Activated B cell treated with CpG ODN at 0.5 μM for 24 hours (primary cell): ENCODE measurements at regions of chr20 and their contacts with region 1.

Region 1: DNA sequence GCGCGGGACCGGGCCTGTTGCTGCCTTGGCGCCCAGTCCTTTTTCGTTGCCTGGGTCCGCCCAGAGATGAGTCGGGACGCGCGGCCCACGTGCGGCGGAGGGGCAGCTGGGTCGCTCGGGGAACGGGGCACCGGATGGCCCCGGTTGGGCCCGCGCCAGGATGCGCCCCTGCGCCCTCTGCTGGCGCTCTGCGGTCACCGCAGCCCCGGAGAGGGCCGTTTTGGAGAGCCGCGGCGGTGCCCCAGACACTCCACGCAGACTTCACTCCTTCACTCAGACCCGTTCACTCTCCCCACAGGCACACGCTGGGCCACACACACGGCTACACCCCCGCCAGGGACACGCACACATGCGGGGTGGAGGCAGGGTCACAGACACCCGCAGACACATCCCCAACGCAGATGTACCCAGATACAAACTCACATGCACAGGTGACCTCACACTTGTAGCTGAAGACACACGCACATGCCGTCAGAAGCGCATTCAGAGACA is 38.8 kb downstream of the SRC start:
- DNase-seq: peak; percentile 87
- ATAC-seq: peak; percentile 59
- H3K4me3 Mint-ChIP-seq: peak overlapping the region; percentile 80
- H3K27ac Mint-ChIP-seq: peak overlapping the region; percentile 82
- H3K4me1 Mint-ChIP-seq: peaks cover 47% of the 10 kb centered on the region
- H3K27me3 Mint-ChIP-seq: no peaks in the 10 kb centered on the region
- CTCF ChIP-seq: peak; percentile 77

Region 2: DNA sequence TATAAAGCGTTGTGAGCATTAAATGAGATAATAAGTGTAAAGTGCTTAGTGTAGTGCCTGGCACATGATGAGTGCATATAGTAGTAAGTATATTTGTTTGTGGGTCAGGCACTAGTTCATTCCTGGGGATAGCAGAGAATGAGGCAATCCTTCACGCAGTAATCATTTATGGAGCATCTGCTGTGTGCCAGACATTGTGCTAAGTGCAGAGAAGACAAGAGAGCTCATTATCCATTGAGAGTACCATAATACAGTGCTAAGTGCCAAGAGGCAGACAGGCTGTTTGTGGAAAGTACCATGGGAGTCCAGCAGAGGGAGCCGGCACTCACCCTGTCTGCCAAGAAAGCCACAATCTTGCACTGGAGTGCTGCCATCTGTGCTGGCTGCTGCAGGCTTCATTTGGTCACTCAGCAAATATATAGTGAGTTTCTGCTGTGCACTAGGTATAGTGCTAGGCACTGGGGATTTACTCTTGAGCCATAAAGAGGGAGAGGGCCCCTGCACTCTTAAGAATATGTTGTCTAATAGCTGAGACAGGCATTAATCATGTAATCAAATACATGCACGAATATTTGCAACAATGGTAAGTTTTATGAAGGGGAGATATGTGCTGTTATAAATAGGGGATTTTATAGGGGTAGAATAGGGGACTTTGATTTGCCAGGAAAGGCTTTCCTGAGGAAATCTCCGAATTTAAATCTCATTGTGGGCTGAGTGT is 192.4 kb before region 1 on chr20:
- CTCF ChIA-PET with region 1: interaction called, 9 read pairs
- POLR2A ChIA-PET with region 1: no interaction called
- intact Hi-C with region 1: loop called (anchors 1 kb)
- DNase-seq: peak; percentile 46
- ATAC-seq: peak; percentile 84
- H3K4me3 Mint-ChIP-seq: no peak overlapping the region
- H3K27ac Mint-ChIP-seq: no peak overlapping the region
- H3K4me1 Mint-ChIP-seq: peaks cover 57% of the 10 kb centered on the region
- H3K27me3 Mint-ChIP-seq: no peaks in the 10 kb centered on the region
- CTCF ChIP-seq: peak; percentile 54

Region 3: DNA sequence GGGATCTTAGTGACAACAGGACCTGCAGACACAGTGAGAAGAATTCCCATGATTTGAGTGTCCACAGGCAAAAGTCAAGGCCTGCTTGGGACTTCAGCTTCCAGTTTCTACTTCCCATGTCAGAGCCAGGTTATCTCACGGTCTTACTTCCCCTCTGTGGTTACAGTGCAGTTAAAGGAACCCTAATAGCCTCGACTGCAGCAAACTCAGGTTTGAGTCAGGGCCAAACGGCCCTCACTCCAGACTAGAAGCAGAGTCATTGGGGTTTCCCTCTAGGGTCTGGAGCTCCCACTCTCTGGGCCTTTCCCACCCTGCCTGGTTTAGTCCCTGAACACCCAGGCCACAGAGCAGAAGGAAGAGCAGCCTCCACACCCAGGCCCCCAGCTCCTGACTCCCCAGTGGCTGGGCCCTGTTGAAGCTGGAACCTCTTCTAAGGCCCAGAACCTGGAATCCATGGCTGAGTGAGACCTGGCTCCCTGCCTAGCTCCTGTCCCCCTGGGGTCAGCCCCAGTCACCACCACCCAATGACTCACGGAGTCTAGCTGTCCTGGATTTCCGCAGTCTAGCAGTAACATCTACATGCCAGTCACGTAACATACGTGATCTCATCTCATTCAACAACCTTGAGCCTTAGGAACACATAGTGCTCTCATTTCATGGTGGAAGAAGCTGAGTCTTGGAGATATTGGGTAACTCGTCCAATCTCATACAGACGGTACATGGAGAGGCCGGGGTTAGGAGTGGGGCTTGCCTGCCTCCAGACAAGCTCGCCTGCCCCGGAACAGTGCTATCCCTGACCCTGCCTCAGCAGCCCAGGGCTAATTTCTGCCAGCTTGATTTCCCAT is 113.9 kb before region 1 on chr20:
- CTCF ChIA-PET with region 1: interaction called, 59 read pairs
- POLR2A ChIA-PET with region 1: interaction called, 14 read pairs
- intact Hi-C with region 1: loop called (anchors 1 kb)
- DNase-seq: peak; percentile 20
- ATAC-seq: peak; percentile 74
- H3K4me3 Mint-ChIP-seq: peak overlapping the region; percentile 11
- H3K27ac Mint-ChIP-seq: peak overlapping the region; percentile 72
- H3K4me1 Mint-ChIP-seq: peaks cover 52% of the 10 kb centered on the region
- H3K27me3 Mint-ChIP-seq: no peaks in the 10 kb centered on the region
- CTCF ChIP-seq: no peak

Region 4: DNA sequence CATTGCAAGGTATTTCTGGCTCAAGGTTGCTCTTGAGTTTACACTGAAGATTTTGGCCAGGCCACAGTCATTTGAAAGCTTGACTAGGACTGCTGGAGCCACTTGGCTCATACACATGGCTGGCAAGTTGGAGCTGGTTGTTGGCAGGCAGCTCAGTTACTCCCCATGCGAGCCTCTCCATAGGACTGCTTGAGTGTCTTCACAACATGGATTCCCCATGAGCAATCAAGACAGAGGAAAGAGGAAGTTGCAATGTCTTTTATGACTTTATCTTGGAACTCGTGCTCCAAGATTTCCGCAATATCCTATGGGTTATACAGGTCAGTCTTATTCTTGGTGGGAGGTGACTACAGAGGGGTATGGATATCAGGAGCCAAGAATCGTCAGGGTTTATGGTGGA is 96.6 kb before region 1 on chr20:
- CTCF ChIA-PET with region 1: interaction called, 13 read pairs
- POLR2A ChIA-PET with region 1: interaction called, 6 read pairs
- intact Hi-C with region 1: loop called (anchors 1 kb)
- DNase-seq: no peak
- ATAC-seq: no peak
- H3K4me3 Mint-ChIP-seq: no peak overlapping the region
- H3K27ac Mint-ChIP-seq: no peak overlapping the region
- H3K4me1 Mint-ChIP-seq: peaks cover 35% of the 10 kb centered on the region
- H3K27me3 Mint-ChIP-seq: no peaks in the 10 kb centered on the region
- CTCF ChIP-seq: no peak

Region 5: DNA sequence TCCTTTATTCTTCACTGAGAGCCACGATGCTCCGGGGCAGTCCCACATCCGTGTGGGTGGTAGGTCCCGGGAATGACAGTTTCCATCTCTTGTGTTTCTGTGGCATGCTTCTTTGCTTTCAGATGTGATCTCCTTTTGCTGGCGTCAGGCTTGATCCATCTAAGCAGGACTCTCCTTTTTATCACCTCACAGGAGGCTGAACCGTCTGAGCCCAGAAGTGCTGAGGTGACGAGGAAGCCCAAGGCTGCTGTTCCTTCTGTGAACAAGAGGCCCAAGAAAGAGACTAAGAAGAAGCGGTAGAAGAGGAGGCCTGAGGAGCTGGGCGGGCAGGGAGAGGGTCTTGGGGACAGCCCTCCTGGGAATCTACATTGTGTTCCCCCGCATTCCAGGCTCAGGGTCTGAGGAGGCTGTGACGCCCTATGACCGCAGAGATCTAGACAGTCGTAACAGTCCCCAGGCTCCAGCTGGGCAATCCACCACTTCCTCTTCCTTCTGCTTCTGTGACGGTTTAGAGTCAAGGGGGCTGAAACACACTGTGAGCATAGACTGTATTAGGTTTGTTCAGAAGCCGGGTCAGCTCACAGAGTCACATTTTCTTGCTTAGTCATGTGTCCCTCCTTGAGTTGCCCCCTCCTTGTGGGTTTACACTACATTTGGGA is 68.5 kb before region 1 on chr20:
- CTCF ChIA-PET with region 1: interaction called, 10 read pairs
- POLR2A ChIA-PET with region 1: interaction called, 13 read pairs
- intact Hi-C with region 1: loop called (anchors 1 kb)
- DNase-seq: peak; percentile 62
- ATAC-seq: peak; percentile 90
- H3K4me3 Mint-ChIP-seq: peak overlapping the region; percentile 59
- H3K27ac Mint-ChIP-seq: peak overlapping the region; percentile 92
- H3K4me1 Mint-ChIP-seq: peaks cover 56% of the 10 kb centered on the region
- H3K27me3 Mint-ChIP-seq: no peaks in the 10 kb centered on the region
- CTCF ChIP-seq: no peak

Region 6: DNA sequence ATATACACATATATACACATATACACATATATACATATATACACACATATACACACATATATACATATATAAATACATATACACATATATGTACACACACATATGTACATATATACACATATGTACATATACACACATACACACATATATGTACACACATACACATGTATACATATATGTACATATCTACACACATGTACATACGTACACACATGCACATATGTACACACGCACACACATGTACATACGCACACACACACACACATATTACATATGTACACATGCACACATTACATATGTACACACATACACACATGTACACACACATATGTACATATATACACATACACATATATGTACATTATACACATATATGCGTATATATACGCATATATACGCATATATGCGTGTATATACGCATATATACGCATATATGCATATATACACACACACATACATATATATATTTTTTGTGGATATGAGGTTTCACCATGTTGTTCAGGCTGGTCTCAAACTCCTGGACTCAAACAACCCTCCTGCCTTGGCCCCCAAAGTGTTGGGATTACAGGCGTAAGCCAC is 11.6 kb before region 1 on chr20:
- CTCF ChIA-PET with region 1: interaction called, 6 read pairs
- POLR2A ChIA-PET with region 1: interaction called, 17 read pairs
- intact Hi-C with region 1: no loop called
- DNase-seq: no peak
- ATAC-seq: no peak
- H3K4me3 Mint-ChIP-seq: no peak overlapping the region
- H3K27ac Mint-ChIP-seq: no peak overlapping the region
- H3K4me1 Mint-ChIP-seq: peaks cover 41% of the 10 kb centered on the region
- H3K27me3 Mint-ChIP-seq: no peaks in the 10 kb centered on the region
- CTCF ChIP-seq: no peak

Region 7: GRCh38 chr20:37564388-37565133 is 179.8 kb after region 1 on chr20:
- CTCF ChIA-PET with region 1: no interaction called
- POLR2A ChIA-PET with region 1: no interaction called
- intact Hi-C with region 1: no loop called
- DNase-seq: peak; percentile 58
- ATAC-seq: peak; percentile 77
- H3K4me3 Mint-ChIP-seq: no peak overlapping the region
- H3K27ac Mint-ChIP-seq: no peak overlapping the region
- H3K4me1 Mint-ChIP-seq: peaks cover 5% of the 10 kb centered on the region
- H3K27me3 Mint-ChIP-seq: peaks cover 32% of the 10 kb centered on the region
- CTCF ChIP-seq: peak; percentile 43